ENCODE measurements at regions of chr11 and their contacts with region 1.

Region 1: GRCh38 chr11:18419040-18419439 is 6.9 kb downstream of the LDHC start:
- DNase-seq: no peak
- H3K4me3 ChIP-seq: no peak overlapping the region
- H3K27ac ChIP-seq: no peak overlapping the region
- H3K27me3 ChIP-seq: no peaks in the 10 kb centered on the region
- CTCF ChIP-seq: no peak

Region 2: DNA sequence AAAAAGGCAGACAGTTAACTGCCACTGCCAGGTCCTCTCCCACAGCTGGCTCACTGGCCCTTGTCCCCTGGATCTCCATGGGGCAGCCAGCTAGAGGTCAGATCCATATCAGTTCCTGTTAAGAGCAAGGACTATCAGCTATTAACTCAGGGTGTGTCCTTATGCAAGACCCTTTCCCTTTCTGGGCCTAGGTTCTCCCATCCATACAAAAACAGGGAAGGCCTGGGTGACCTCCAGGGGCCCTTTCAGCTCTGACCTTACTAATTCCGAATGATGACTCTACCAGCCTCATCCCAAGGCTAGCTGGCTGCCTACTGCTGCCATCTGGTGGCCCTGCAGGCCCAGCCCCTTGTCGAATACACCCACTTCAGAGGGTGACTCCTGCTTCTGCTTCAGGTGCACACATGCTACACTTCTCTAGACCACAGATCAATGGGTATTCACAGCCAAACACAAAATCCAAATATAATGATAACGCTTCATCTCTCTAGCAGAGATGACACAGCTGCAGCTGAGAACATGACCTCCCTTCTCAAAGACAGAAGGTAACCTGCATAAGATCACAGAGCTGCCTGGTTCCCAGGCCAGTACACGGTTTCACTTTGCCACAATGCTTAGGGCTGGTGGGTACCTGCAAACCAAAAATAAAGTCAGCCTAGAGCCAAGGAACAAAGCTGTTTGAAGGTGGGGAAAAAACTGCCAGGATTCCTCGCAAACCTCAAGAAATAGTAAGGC is 440.3 kb before region 1 on chr11:
- CTCF ChIA-PET with region 1: no interaction called
- POLR2A ChIA-PET with region 1: no interaction called
- DNase-seq: no peak
- H3K4me3 ChIP-seq: no peak overlapping the region
- H3K27ac ChIP-seq: no peak overlapping the region
- H3K27me3 ChIP-seq: no peaks in the 10 kb centered on the region
- CTCF ChIP-seq: peak; percentile 92

Region 3: DNA sequence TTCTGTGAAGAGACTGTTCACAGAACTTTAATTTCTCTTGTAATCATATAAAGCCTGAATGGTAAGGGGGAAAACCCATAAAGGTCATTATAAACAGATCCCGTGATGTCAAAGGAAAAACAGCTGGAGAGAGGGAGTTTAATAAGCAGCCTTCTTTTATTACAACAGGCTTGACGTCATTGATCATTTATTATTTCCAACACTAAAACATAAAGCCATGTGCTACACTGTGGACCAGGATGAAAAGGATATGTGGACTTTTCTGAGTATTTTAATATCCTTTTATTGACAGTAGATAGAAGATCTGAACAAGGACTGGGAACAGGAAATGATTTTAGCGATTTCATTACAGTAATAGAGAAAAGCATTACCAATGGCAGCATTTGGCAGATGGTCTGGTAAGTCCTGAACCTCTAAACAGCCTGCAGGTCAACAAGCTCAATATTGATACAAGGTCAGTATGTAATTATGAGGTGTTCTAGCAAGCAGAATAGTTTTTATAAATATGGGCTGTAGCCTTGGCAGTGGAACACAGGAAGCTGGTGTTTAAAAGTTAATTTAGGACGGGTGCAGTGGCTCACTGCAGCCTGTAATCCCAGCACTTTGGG is 347.8 kb before region 1 on chr11:
- CTCF ChIA-PET with region 1: interaction called, 10 read pairs
- POLR2A ChIA-PET with region 1: no interaction called
- DNase-seq: peak; percentile 52
- H3K4me3 ChIP-seq: no peak overlapping the region
- H3K27ac ChIP-seq: peak overlapping the region; percentile 63
- H3K27me3 ChIP-seq: no peaks in the 10 kb centered on the region
- CTCF ChIP-seq: no peak